ENCODE measurements at regions of chr13 and their contacts with region 1.

Region 1: GRCh38 chr13:27826379-27827353 is 34.4 kb downstream of the GSX1 start:
- DNase-seq: peak; percentile 77
- H3K4me3 Mint-ChIP-seq: no peak overlapping the region
- H3K27ac Mint-ChIP-seq: no peak overlapping the region
- H3K4me1 Mint-ChIP-seq: no peaks in the 10 kb centered on the region
- H3K27me3 Mint-ChIP-seq: peaks cover 58% of the 10 kb centered on the region

Region 2: GRCh38 chr13:27362064-27362883 is 464.4 kb before region 1 on chr13:
- CTCF ChIA-PET with region 1: interaction called, 117 read pairs
- intact Hi-C with region 1: loop called (anchors 1 kb)
- DNase-seq: peak; percentile 85
- H3K4me3 Mint-ChIP-seq: no peak overlapping the region
- H3K27ac Mint-ChIP-seq: no peak overlapping the region
- H3K4me1 Mint-ChIP-seq: no peaks in the 10 kb centered on the region
- H3K27me3 Mint-ChIP-seq: peaks cover 18% of the 10 kb centered on the region

Region 3: DNA sequence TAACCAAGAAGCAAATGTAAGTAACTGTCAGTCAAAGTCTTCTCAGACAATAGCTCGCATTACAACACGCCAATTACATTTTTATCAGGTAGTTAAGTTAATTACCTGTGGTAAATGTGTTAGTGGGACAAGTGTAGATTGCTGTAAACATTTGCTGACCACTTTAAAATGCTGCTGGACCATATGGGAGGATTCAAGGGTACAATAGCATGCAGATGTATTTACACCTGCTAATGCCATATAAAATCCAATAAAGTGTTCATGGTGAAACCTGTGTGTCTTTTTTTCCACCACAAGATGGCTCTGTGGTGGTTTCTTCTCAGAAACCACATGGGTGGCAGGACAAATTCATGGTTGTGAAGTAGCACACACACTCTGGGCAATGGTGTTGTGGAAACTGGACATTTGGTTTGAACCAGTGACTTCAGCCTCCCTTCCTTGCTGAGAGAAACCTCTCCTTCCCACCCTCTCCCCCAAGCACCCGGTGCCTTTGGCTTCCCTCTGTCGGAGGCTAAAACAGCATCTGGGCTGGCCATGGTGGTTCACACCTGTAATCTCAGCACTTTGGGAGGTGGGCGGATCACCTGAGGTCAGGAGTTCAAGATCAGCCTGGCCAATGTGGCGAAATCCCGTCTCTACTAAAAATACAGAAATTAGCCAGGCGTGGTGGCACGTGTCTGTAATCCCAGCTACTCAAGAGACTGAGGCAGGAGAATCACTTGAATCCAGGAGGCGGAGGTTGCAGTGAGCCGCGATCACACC is 420.3 kb before region 1 on chr13:
- CTCF ChIA-PET with region 1: interaction called, 13 read pairs
- intact Hi-C with region 1: loop called (anchors 1 kb)
- DNase-seq: peak; percentile 27
- H3K4me3 Mint-ChIP-seq: no peak overlapping the region
- H3K27ac Mint-ChIP-seq: no peak overlapping the region
- H3K4me1 Mint-ChIP-seq: no peaks in the 10 kb centered on the region
- H3K27me3 Mint-ChIP-seq: peaks cover 3% of the 10 kb centered on the region

Region 4: GRCh38 chr13:27559714-27560113 is 267.0 kb before region 1 on chr13:
- CTCF ChIA-PET with region 1: interaction called, 12 read pairs
- intact Hi-C with region 1: no loop called
- DNase-seq: no peak
- H3K4me3 Mint-ChIP-seq: no peak overlapping the region
- H3K27ac Mint-ChIP-seq: no peak overlapping the region
- H3K4me1 Mint-ChIP-seq: no peaks in the 10 kb centered on the region
- H3K27me3 Mint-ChIP-seq: no peaks in the 10 kb centered on the region

Region 5: GRCh38 chr13:27792393-27793218 is 34.1 kb before region 1 on chr13 and contains the start of gene GSX1:
- CTCF ChIA-PET with region 1: interaction called, 22 read pairs
- intact Hi-C with region 1: loop called (anchors 2 kb)
- DNase-seq: peak; percentile 69
- H3K4me3 Mint-ChIP-seq: peak within 1 kb of the TSS; percentile 71
- H3K27ac Mint-ChIP-seq: no peak within 1 kb of the TSS
- H3K4me1 Mint-ChIP-seq: peaks cover 38% of the 10 kb centered on the region
- H3K27me3 Mint-ChIP-seq: peaks cover 76% of the 10 kb centered on the region
- total RNA-seq, gene GSX1: not detected

Region 6: GRCh38 chr13:27953676-27954405 is 127.2 kb after region 1 on chr13:
- CTCF ChIA-PET with region 1: interaction called, 155 read pairs
- intact Hi-C with region 1: loop called (anchors 1 kb)
- DNase-seq: peak; percentile 71
- H3K4me3 Mint-ChIP-seq: peak overlapping the region; percentile 69
- H3K27ac Mint-ChIP-seq: no peak overlapping the region
- H3K4me1 Mint-ChIP-seq: peaks cover 8% of the 10 kb centered on the region
- H3K27me3 Mint-ChIP-seq: peaks cover 60% of the 10 kb centered on the region

Measured in activated naive CD4-positive, alpha-beta T cell treated with anti-CD3 and anti-CD28 coated beads for 36 hours (primary cell).